Ovary (tissue), 10 donors: ENCODE measurements at regions of chr10 and their contacts with region 1.

Region 1: DNA sequence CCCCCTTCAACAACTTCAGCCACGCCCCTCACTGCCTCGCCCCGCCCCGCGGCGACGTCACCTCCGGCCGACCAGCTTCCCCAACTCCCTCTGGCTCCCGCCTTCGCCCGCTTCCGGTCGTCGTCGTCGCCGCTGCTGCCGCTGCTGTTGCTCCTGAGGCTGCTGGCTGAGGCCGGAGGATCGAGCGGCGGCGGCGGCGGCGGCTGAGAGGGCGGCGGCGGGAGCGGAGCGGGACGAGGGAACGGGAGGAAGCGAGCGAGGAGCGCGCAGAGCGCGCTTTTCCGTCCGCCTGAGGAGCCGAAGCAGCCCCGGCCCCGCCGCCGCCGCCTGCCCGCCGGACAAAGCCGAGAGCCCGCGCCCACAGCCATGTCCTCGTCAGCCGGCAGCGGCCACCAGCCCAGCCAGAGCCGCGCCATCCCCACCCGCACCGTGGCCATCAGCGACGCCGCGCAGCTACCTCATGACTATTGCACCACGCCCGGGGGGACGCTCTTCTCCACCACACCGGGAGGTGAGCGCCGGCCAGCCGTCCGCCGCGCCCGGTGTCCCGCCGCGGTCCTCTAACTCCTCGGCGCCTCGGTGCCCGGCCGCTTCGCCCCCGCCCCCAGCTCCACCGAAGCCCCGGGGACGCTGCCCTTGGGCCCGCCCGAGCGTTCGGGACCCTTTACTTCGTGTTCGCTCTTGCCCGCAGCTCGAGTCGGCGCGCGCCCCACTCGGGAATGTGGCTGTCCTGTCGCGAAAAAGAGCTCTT is at the start of gene EIF4EBP2:
- DNase-seq: peak; percentile 98 to 100 (median 99)
- H3K4me3 ChIP-seq: peak within 1 kb of the TSS; percentile 100
- H3K27ac ChIP-seq: peak within 1 kb of the TSS; percentile 95 to 98
- H3K4me1 ChIP-seq: peaks cover 7% of the 10 kb centered on the region
- H3K27me3 ChIP-seq: no peaks in the 10 kb centered on the region
- CTCF ChIP-seq: no peak
- EP300 ChIP-seq: no peak
- POLR2A ChIP-seq: peak; percentile 99
- total RNA-seq, gene EIF4EBP2: 46.3 to 99.2 (median 72.5) TPM

Region 2: GRCh38 chr10:70381471-70382421 is 22.5 kb before region 1 on chr10:
- intact Hi-C with region 1: loop called in 1 of 4 experiments (anchors 2 kb)
- DNase-seq: peak; percentile 24 to 56 (median 44)
- H3K4me3 ChIP-seq: peak overlapping the region; percentile 78
- H3K27ac ChIP-seq: no peak overlapping the region
- H3K4me1 ChIP-seq: no peaks in the 10 kb centered on the region
- H3K27me3 ChIP-seq: no peaks in the 10 kb centered on the region
- CTCF ChIP-seq: no peak
- EP300 ChIP-seq: no peak
- POLR2A ChIP-seq: no peak